Motor neuron (in vitro differentiated cells): ENCODE measurements at regions of chr4 and their contacts with region 1.

Region 1: GRCh38 chr4:108018040-108018883 is 28.6 kb downstream of the HADH start:
- ATAC-seq: peak; percentile 49 to 84 (median 73)
- H3K4me3 ChIP-seq: no peak overlapping the region
- H3K27ac ChIP-seq: no peak overlapping the region
- H3K4me1 ChIP-seq: no peaks in the 10 kb centered on the region

Region 2: GRCh38 chr4:108560616-108561015 is 542.4 kb after region 1 on chr4:
- in situ Hi-C with region 1: loop called in 2 of 9 experiments (anchors 25 kb)
- ATAC-seq: peak in 2 of 8 experiments; percentile 56 to 66
- H3K4me3 ChIP-seq: no peak overlapping the region
- H3K27ac ChIP-seq: no peak overlapping the region
- H3K4me1 ChIP-seq: no peaks in the 10 kb centered on the region

Region 3: DNA sequence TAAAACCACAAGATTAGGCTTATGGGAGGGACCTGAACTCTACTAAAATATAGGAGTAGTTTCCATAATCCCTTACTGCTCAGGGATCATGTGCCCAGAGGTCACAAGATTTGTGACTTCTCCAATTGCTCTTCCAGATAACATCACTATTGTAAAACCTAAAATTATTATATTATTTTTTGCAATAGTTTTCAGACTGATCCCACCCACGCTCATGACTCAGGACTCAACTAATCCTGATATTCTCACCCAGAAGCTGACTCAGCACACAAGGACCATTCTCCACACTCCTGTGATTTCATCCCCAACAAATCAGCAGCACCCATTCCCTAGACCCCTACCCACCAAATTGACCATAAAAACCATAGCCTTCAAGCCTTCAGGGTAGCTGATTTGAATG is 578.1 kb after region 1 on chr4:
- in situ Hi-C with region 1: loop called in 1 of 9 experiments (anchors 25 kb)
- ATAC-seq: no peak
- H3K4me3 ChIP-seq: no peak overlapping the region
- H3K27ac ChIP-seq: no peak overlapping the region
- H3K4me1 ChIP-seq: no peaks in the 10 kb centered on the region